ENCODE measurements at regions of chr14 and their contacts with region 1.

Region 1: GRCh38 chr14:90758028-90758889 is 58.0 kb downstream of the TTC7B start:
- DNase-seq: peak; percentile 87 to 90
- ATAC-seq: peak; percentile 57 to 61
- H3K4me3 ChIP-seq: peak overlapping the region; percentile 54 to 66 (median 58)
- H3K27ac ChIP-seq: peak overlapping the region; percentile 91 to 97 (median 95)
- H3K4me1 ChIP-seq: peaks cover 15 to 29% of the 10 kb centered on the region in 2 donors
- H3K27me3 ChIP-seq: no peaks in the 10 kb centered on the region
- CTCF ChIP-seq: peak; percentile 86 to 96 (median 94)
- POLR2A ChIP-seq: peak; percentile 78 to 80

Region 2: GRCh38 chr14:89977668-89978067 is 780.6 kb before region 1 on chr14:
- in situ Hi-C with region 1: loop called (anchors 25 kb)
- intact Hi-C with region 1: no loop called
- DNase-seq: no peak
- ATAC-seq: no peak
- H3K4me3 ChIP-seq: no peak overlapping the region
- H3K27ac ChIP-seq: no peak overlapping the region
- H3K4me1 ChIP-seq: peaks cover 0 to 5% of the 10 kb centered on the region in 2 donors
- H3K27me3 ChIP-seq: no peaks in the 10 kb centered on the region
- CTCF ChIP-seq: no peak
- POLR2A ChIP-seq: no peak

Region 3: GRCh38 chr14:90383075-90383730 is 375.1 kb before region 1 on chr14:
- in situ Hi-C with region 1: loop called in 1 of 4 experiments (anchors 10 kb)
- intact Hi-C with region 1: loop called (anchors 5 kb)
- DNase-seq: peak; percentile 99 to 100
- ATAC-seq: peak; percentile 77 to 81
- H3K4me3 ChIP-seq: peak overlapping the region; percentile 69 to 80 (median 78)
- H3K27ac ChIP-seq: peak overlapping the region; percentile 97 to 99 (median 98)
- H3K4me1 ChIP-seq: peaks cover 29 to 40% of the 10 kb centered on the region in 2 donors
- H3K27me3 ChIP-seq: no peaks in the 10 kb centered on the region
- CTCF ChIP-seq: peak in 2 of 5 experiments; percentile 27 to 39
- POLR2A ChIP-seq: peak; percentile 94 to 98

Region 4: DNA sequence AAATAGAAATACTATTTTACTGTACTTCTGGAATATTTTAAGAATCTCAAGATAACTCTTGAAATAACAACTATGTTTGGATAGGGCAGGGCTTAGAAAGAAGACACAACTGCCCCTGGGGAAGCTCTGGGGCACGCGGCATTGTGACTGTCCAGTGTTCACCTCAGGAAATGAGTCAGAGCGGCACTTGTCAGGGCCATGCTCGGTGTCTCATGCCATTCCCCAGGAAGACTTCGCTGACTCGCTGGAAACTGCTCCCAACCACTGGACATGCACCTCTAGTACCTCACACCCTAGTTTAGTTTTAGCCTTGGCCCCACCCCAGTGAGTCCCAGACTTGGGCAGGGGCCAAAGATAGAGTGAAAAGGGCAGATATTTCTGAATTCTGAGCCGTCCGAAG is 134.0 kb before region 1 on chr14:
- in situ Hi-C with region 1: no loop called
- intact Hi-C with region 1: loop called (anchors 5 kb)
- DNase-seq: peak; percentile 94 to 97
- ATAC-seq: peak; percentile 58 to 64
- H3K4me3 ChIP-seq: peak overlapping the region in 2 of 4 donors; percentile 9 to 28
- H3K27ac ChIP-seq: peak overlapping the region; percentile 89 to 96 (median 94)
- H3K4me1 ChIP-seq: peaks cover 51 to 68% of the 10 kb centered on the region in 2 donors
- H3K27me3 ChIP-seq: no peaks in the 10 kb centered on the region
- CTCF ChIP-seq: no peak
- POLR2A ChIP-seq: peak; percentile 47 to 48

Region 5: GRCh38 chr14:90739318-90740068 is 18.8 kb before region 1 on chr14:
- in situ Hi-C with region 1: no loop called
- intact Hi-C with region 1: loop called (anchors 2 kb)
- DNase-seq: peak; percentile 71 to 88
- ATAC-seq: peak; percentile 97
- H3K4me3 ChIP-seq: peak overlapping the region in 1 of 4 donors; percentile 32
- H3K27ac ChIP-seq: peak overlapping the region; percentile 84 to 97 (median 91)
- H3K4me1 ChIP-seq: peaks cover 43 to 52% of the 10 kb centered on the region in 2 donors
- H3K27me3 ChIP-seq: no peaks in the 10 kb centered on the region
- CTCF ChIP-seq: no peak
- POLR2A ChIP-seq: peak in 1 of 2 donors; percentile 51

Region 6: GRCh38 chr14:90911121-90911520 is 152.9 kb after region 1 on chr14:
- in situ Hi-C with region 1: no loop called
- intact Hi-C with region 1: no loop called
- DNase-seq: no peak
- ATAC-seq: no peak
- H3K4me3 ChIP-seq: no peak overlapping the region
- H3K27ac ChIP-seq: no peak overlapping the region
- H3K4me1 ChIP-seq: no peaks in the 10 kb centered on the region
- H3K27me3 ChIP-seq: no peaks in the 10 kb centered on the region
- CTCF ChIP-seq: no peak
- POLR2A ChIP-seq: no peak

Region 7: DNA sequence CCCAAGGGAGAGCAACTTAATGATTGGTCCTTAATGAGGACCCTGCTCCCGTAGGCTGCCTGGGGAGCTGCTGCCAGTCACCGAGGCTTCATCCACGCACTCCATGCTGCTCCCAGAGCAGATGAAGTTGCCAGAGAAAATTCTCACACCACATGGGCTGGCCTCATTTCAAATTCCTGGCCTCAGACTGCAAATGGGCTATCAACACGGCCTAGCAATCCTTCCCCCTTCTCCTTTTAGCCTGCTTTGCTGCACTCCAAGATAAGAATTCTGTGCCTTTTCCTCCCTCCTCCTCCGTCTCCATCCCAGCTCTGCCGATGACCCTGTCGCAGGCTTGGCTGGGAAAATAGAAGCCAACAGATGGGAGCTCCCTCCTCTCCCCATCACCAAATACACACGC is 344.9 kb after region 1 on chr14:
- in situ Hi-C with region 1: no loop called
- intact Hi-C with region 1: no loop called
- DNase-seq: no peak
- ATAC-seq: no peak
- H3K4me3 ChIP-seq: no peak overlapping the region
- H3K27ac ChIP-seq: no peak overlapping the region
- H3K4me1 ChIP-seq: peaks cover 5 to 7% of the 10 kb centered on the region in 2 donors
- H3K27me3 ChIP-seq: no peaks in the 10 kb centered on the region
- CTCF ChIP-seq: no peak
- POLR2A ChIP-seq: no peak

Region 8: GRCh38 chr14:91164685-91165084 is 406.4 kb after region 1 on chr14:
- in situ Hi-C with region 1: no loop called
- intact Hi-C with region 1: loop called (anchors 10 kb)
- DNase-seq: peak; percentile 82 to 93
- ATAC-seq: peak; percentile 23 to 27
- H3K4me3 ChIP-seq: no peak overlapping the region
- H3K27ac ChIP-seq: peak overlapping the region; percentile 90 to 96 (median 94)
- H3K4me1 ChIP-seq: peaks cover 58 to 82% of the 10 kb centered on the region in 2 donors
- H3K27me3 ChIP-seq: no peaks in the 10 kb centered on the region
- CTCF ChIP-seq: no peak
- POLR2A ChIP-seq: no peak